Heart right ventricle (tissue), 16 donors: ENCODE measurements at regions of chr1 and their contacts with region 1.

Region 1: DNA sequence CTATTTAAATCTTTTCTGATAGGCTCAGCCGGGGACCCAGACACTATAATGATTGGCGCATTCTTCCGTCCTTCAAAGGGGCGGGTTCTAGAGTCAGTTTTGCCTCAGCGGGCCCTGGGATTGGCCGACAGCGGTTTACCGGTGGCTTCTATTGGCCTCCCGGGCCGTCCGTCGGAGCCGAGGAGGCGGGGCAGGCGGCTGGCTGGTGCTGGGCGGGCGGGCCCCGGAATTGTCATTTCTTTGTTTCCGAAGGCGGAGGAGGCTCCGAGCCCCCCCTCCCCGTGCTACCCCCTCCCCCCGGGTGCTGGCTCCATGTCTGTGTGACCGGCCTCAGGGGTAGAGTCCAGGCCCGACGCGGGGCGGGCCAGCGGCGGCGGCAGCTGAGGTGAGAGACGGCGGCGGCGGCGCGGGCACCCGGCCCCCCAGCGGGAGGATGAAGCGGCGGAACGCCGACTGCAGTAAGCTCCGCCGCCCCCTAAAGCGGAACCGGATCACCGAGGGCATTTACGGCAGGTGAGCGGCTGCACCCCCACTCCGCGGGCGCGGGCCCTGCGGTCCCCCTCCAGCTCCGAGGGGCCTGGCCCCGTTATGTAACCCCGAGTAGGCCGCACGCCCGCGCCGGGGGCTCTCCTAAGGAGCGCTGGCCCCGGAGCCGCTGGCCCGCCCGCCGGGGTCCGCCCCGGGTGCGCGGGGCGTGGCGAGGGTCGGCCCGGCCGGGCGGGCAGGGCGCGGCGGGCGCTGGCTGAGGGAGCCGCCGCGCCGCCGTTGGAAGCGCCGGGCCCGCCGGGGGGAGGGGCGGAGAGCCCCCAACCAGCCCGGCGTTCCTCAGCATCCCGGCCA is at the start of gene MACO1:
- DNase-seq: peak; percentile 96 to 97
- ATAC-seq: peak; percentile 95 to 99 (median 98)
- H3K4me3 ChIP-seq: peak within 1 kb of the TSS; percentile 71 to 99 (median 87)
- H3K27ac ChIP-seq: peak within 1 kb of the TSS; percentile 86 to 97 (median 94)
- H3K4me1 ChIP-seq: peaks cover 3 to 50% (median 47%) of the 10 kb centered on the region in 9 donors
- H3K27me3 ChIP-seq: no peaks in the 10 kb centered on the region
- CTCF ChIP-seq: no peak
- total RNA-seq, gene MACO1: 9.4 to 15.5 (median 13.5) TPM

Region 2: GRCh38 chr1:25469177-25469576 is 38.3 kb after region 1 on chr1:
- intact Hi-C with region 1: loop called in 2 of 10 experiments (anchors 5 kb)
- DNase-seq: no peak
- ATAC-seq: no peak
- H3K4me3 ChIP-seq: no peak overlapping the region
- H3K27ac ChIP-seq: peak overlapping the region in 5 of 10 donors; percentile 34 to 66 (median 39)
- H3K4me1 ChIP-seq: peaks cover 0 to 62% (median 44%) of the 10 kb centered on the region in 9 donors
- H3K27me3 ChIP-seq: no peaks in the 10 kb centered on the region
- CTCF ChIP-seq: no peak

Region 3: DNA sequence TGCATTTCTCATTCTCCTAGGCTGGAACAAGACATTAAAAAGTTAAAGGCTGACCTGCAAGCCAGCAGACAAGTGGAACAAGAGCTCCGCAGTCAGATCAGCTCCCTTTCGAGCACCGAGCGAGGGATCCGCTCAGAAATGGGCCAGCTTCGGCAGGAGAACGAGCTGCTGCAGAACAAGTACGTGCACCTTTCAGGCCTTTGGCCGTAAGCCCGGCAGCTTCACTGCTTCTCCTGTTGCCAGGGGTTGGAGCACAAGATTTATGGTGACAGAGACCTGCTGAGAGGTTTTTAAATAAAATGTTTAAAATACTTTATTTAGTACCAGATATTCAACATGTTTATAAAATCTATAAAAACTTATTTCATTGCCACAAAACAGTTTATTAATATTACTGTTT is 53.2 kb after region 1 on chr1:
- intact Hi-C with region 1: loop called in 2 of 10 experiments (anchors 5 kb)
- DNase-seq: peak; percentile 53 to 72
- ATAC-seq: peak; percentile 46 to 90 (median 82)
- H3K4me3 ChIP-seq: no peak overlapping the region
- H3K27ac ChIP-seq: peak overlapping the region in 8 of 10 donors; percentile 12 to 77 (median 40)
- H3K4me1 ChIP-seq: peaks cover 0 to 35% (median 14%) of the 10 kb centered on the region in 9 donors
- H3K27me3 ChIP-seq: no peaks in the 10 kb centered on the region
- CTCF ChIP-seq: no peak

Region 4: DNA sequence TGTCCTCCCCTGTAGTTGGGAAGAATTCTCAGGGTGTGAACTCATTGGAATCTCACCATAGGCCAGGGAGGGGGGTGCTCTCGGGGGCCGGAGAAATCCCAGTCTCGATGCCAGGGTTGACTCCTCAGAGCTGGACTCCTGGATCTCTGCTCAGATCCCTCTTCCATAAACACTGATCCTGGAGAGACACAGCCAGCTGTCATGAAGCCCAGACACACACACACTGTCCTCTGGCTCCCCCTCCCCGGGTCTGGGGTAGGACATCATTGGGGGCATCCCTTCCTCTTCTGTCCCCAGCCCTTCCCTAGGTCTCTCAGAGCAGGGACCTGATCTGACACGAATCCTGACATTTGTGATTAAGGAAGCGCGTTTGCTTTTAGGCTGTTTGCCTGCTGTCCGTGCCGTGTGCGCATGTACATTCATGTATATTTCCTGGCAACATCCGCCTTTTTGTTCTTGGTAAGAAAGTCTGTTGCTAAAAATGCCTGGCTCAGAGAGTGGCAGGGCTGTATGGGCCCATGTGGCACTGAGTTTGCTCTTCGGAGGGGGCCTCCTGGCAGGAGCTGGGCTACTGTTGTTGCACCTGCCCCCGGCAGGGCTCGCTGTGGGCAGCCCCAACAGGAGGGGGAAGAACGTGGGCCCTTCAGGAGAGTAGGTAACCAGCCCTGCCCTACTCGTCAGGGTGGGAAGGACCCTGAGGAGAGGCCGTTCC is 323.7 kb after region 1 on chr1:
- intact Hi-C with region 1: no loop called
- DNase-seq: no peak
- ATAC-seq: peak in 1 of 8 donors; percentile 20
- H3K4me3 ChIP-seq: no peak overlapping the region
- H3K27ac ChIP-seq: no peak overlapping the region
- H3K4me1 ChIP-seq: peaks cover 0 to 5% (median 0%) of the 10 kb centered on the region in 9 donors
- H3K27me3 ChIP-seq: no peaks in the 10 kb centered on the region
- CTCF ChIP-seq: no peak